Posterior vena cava (tissue), 2 donors: ENCODE measurements at regions of chr15 and their contacts with region 1.

Region 1: GRCh38 chr15:100879464-100880138 is at the start of gene ALDH1A3:
- DNase-seq: no peak
- total RNA-seq, gene ALDH1A3: 26.6 to 29.9 TPM

Region 2: DNA sequence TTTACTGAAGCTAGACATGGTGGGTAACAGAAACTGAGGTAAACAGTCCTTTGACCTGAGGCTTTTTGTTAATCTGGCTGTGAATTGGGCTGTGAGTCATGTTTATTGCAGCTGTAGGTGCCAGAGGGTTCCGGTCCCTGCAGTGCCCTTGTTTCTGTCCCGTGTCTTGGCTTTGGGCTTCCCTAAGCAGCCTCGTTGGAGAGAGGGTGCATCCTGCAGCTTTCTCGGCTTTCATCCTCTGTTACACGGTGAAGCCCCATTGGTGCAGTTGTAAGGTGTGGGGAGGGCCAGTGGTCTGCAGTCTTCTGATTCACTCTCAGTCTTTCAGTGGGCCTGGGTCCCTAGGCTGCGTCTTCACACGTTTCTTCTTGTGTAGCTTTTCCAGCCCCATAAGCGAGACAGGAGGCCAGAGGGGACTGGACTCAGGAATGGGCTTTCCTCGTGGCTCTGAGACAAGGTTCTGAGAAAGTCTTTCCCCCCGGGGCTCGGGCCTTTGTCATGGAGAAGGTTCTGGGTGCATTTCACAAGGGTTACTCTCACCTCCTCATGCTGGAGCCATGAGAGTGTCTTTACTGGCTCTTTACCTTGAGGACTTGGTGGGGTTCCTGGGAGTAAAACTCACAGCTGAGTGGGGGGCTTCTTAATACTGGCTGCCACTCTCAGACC is 244.1 kb before region 1 on chr15:
- intact Hi-C with region 1: loop called in 1 of 2 experiments (anchors 10 kb)
- DNase-seq: no peak

Region 3: GRCh38 chr15:100934726-100935125 is 55.1 kb after region 1 on chr15:
- intact Hi-C with region 1: no loop called
- DNase-seq: no peak